Right lobe of liver (tissue), 6 donors: ENCODE measurements at regions of chr4 and their contacts with region 1.

Region 1: GRCh38 chr4:122744229-122744628 is 11.7 kb downstream of the BBS12 start:
- DNase-seq: no peak
- ATAC-seq: peak; percentile 23 to 63 (median 43)
- H3K4me3 ChIP-seq: no peak overlapping the region
- H3K27ac ChIP-seq: no peak overlapping the region
- H3K4me1 ChIP-seq: no peaks in the 10 kb centered on the region
- H3K27me3 ChIP-seq: no peaks in the 10 kb centered on the region
- CTCF ChIP-seq: no peak
- POLR2A ChIP-seq: no peak

Region 2: DNA sequence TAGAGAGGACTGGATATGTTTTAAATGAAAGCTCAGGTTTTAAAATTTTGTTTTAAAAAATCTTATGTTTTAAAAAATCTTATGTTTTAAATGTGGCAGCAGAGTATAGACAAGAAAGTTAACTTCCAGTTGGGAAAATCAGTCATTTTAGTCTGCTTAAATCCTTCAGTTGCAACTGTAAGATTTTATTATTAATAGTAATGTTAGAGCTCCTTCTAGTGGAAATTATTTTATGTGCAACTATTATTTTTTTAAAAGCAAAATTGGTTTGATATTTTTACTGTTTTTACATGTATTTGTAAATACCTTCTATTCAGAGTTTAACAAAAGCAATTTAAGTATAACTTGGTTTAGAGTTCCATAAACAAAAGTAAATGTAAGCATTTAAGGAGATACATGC is 186.6 kb after region 1 on chr4:
- intact Hi-C with region 1: loop called in 1 of 2 experiments (anchors 10 kb)
- DNase-seq: no peak
- ATAC-seq: peak in 3 of 4 donors; percentile 29 to 46 (median 44)
- H3K4me3 ChIP-seq: no peak overlapping the region
- H3K27ac ChIP-seq: no peak overlapping the region
- H3K4me1 ChIP-seq: no peaks in the 10 kb centered on the region
- H3K27me3 ChIP-seq: no peaks in the 10 kb centered on the region
- CTCF ChIP-seq: peak; percentile 51 to 66 (median 60)
- POLR2A ChIP-seq: no peak